ENCODE measurements at regions of chr12 and their contacts with region 1.

Region 1: DNA sequence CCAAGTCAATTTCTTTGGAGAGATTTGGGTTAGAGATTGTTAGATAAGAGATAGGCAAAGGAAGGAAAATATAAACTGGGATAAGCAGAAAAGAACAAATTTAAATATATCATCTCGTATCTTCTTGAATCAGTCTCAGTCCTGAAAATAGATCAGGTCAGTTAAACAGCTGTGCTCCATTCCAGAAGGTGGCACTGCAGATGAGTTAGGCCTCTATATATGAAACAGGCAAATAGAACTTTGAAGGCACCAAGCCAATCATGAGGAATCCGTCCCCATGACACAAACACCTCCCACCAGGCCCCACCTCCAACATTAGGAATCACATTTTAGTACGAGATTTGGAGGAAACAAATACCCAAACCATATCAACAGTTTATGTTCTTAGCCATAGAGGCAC is 605.5 kb upstream of the USP15 start:
- DNase-seq: no peak
- ATAC-seq: no peak
- H3K4me3 ChIP-seq: no peak overlapping the region
- H3K27ac ChIP-seq: no peak overlapping the region
- H3K4me1 ChIP-seq: no peaks in the 10 kb centered on the region
- H3K27me3 ChIP-seq: no peaks in the 10 kb centered on the region

Region 2: DNA sequence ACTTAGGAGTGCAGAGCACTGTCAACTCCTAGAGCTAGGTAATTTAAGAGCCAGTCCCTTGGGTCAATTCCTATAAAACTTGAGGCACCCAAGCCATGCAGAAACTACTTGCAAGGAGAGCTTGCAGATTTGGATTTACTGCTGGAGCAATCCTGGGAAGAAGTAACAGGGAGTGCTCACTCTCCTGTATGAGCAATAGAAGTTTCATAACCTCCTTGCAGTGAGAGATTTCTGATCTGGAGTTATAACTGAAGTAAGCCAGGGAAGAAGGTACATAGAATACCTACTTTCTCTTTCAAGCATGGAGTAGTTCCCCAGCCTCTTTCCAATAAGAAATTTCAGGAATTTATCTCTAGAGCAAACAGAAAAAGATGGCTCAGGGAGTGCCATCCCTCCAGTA is 44.6 kb before region 1 on chr12:
- intact Hi-C with region 1: no loop called
- DNase-seq: no peak
- ATAC-seq: no peak
- H3K4me3 ChIP-seq: no peak overlapping the region
- H3K27ac ChIP-seq: no peak overlapping the region
- H3K4me1 ChIP-seq: no peaks in the 10 kb centered on the region
- H3K27me3 ChIP-seq: no peaks in the 10 kb centered on the region

Region 3: GRCh38 chr12:61993734-61994345 is 339.1 kb after region 1 on chr12:
- intact Hi-C with region 1: loop called in 1 of 2 experiments (anchors 5 kb)
- DNase-seq: no peak
- ATAC-seq: peak; percentile 70
- H3K4me3 ChIP-seq: no peak overlapping the region
- H3K27ac ChIP-seq: no peak overlapping the region
- H3K4me1 ChIP-seq: peaks cover 0 to 3% of the 10 kb centered on the region in 2 donors
- H3K27me3 ChIP-seq: peaks cover 0 to 2% of the 10 kb centered on the region in 2 donors

Measured in aorta (tissue), 5 donors.